Endothelial cell of umbilical vein (primary cell): ENCODE measurements at regions of chr2 and their contacts with region 1.

Region 1: DNA sequence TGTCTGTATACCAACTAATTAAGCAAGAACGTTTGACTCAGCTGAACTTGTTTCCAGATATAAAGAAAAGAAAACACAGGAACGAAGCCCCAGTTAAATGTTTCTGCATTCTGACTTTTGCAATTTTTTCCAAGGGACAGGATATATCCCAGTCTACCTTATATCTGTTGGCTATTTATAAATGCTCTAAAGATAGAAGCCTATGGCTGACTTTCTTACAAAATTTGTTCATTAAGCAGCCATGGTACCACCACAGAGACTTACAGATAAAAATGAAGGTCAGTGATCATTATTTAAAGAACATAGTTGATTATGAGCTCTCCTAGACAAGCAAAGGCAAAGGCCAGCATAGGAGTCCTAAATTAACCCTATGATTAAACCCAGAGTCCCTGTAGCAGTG is 462.7 kb upstream of the SPHKAP start:
- DNase-seq: no peak
- H3K4me3 ChIP-seq: no peak overlapping the region
- H3K27ac ChIP-seq: no peak overlapping the region
- H3K4me1 ChIP-seq: no peaks in the 10 kb centered on the region
- H3K27me3 ChIP-seq: no peaks in the 10 kb centered on the region
- CTCF ChIP-seq: no peak
- POLR2A ChIP-seq: no peak

Region 2: DNA sequence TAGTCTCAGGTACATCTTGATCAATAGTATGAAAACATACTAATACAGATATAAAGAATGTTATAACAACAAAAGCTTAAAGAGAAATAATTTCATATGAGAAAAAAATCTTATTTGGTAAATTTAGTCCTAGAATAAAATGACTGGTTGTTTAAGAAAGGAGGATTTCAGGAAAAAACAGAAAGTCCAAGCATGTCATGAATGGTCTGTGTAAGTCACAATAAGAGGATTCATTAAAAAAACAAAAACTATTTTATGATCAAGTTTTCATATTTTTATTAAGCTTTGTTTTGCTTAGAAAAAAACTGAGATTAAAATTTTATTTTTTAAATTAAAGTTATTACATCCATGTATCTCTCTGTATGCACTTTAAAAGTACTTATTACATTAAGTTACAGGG is 108.8 kb before region 1 on chr2:
- CTCF ChIA-PET with region 1: no interaction called
- POLR2A ChIA-PET with region 1: no interaction called
- dilution Hi-C with region 1: no loop called
- intact Hi-C with region 1: no loop called
- DNase-seq: no peak
- H3K4me3 ChIP-seq: no peak overlapping the region
- H3K27ac ChIP-seq: no peak overlapping the region
- H3K4me1 ChIP-seq: no peaks in the 10 kb centered on the region
- H3K27me3 ChIP-seq: no peaks in the 10 kb centered on the region
- CTCF ChIP-seq: no peak
- POLR2A ChIP-seq: no peak

Region 3: GRCh38 chr2:228600265-228600664 is 43.9 kb before region 1 on chr2:
- CTCF ChIA-PET with region 1: no interaction called
- POLR2A ChIA-PET with region 1: no interaction called
- dilution Hi-C with region 1: no loop called
- intact Hi-C with region 1: loop called (anchors 1 kb)
- DNase-seq: no peak
- H3K4me3 ChIP-seq: no peak overlapping the region
- H3K27ac ChIP-seq: no peak overlapping the region
- H3K4me1 ChIP-seq: no peaks in the 10 kb centered on the region
- H3K27me3 ChIP-seq: no peaks in the 10 kb centered on the region
- CTCF ChIP-seq: no peak
- POLR2A ChIP-seq: no peak

Region 4: GRCh38 chr2:228669690-228670089 is 25.5 kb after region 1 on chr2:
- CTCF ChIA-PET with region 1: no interaction called
- POLR2A ChIA-PET with region 1: no interaction called
- dilution Hi-C with region 1: no loop called
- intact Hi-C with region 1: no loop called
- DNase-seq: no peak
- H3K4me3 ChIP-seq: no peak overlapping the region
- H3K27ac ChIP-seq: no peak overlapping the region
- H3K4me1 ChIP-seq: no peaks in the 10 kb centered on the region
- H3K27me3 ChIP-seq: no peaks in the 10 kb centered on the region
- CTCF ChIP-seq: no peak
- POLR2A ChIP-seq: no peak